Activated CD4-positive, alpha-beta T cell treated with anti-CD3 and anti-CD28 coated beads for 36 hours (primary cell): ENCODE measurements at regions of chr15 and their contacts with region 1.

Region 1: GRCh38 chr15:60585743-60586708 is 107.1 kb upstream of the ICE2 start:
- DNase-seq: peak; percentile 68
- ATAC-seq: no peak
- H3K4me3 Mint-ChIP-seq: peak overlapping the region; percentile 30
- H3K27ac Mint-ChIP-seq: peak overlapping the region; percentile 87
- H3K4me1 Mint-ChIP-seq: peaks cover 85% of the 10 kb centered on the region
- H3K27me3 Mint-ChIP-seq: no peaks in the 10 kb centered on the region

Region 2: GRCh38 chr15:59933607-59934006 is 652.4 kb before region 1 on chr15:
- CTCF ChIA-PET with region 1: no interaction called
- POLR2A ChIA-PET with region 1: no interaction called
- intact Hi-C with region 1: no loop called
- DNase-seq: no peak
- ATAC-seq: no peak
- H3K4me3 Mint-ChIP-seq: no peak overlapping the region
- H3K27ac Mint-ChIP-seq: no peak overlapping the region
- H3K4me1 Mint-ChIP-seq: no peaks in the 10 kb centered on the region
- H3K27me3 Mint-ChIP-seq: peaks cover 9% of the 10 kb centered on the region

Region 3: DNA sequence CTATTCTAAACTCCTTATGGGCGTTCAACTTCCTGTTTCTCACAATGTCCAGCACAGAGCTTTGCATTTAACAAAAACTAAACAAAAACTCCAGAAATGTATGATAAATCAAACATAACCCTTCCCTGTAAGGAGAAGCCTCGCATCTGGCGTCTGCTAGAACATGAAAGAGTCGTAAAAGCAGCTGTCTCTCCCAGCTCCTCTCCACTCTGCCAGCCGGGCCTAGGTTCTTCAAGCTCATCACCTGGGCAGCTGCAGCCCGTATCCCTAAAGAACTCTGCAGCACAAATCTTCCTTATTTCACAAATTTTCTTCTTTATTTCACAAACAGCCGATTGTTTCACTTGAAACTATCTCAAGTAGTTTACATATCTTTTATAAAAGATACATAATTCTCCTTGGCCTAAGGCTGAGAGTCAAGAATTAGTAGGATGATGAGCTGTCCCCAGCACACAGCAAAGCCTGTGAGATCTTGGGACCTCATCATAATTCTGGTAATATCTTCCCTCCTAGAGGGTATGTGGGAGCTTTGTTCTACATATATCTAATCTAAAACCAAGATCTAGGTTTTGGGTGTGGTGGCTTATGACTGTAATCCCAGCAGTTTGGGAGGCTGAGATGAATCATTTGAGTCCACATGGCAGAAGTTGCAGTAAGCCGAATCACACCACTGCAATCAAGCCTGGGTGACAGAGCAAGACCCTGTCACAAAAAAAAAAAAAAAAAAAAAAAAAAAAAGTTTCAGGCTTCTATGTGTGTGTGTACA is 223.5 kb before region 1 on chr15:
- CTCF ChIA-PET with region 1: interaction called, 5 read pairs
- POLR2A ChIA-PET with region 1: no interaction called
- intact Hi-C with region 1: loop called in 1 of 2 experiments (anchors 2 kb)
- DNase-seq: peak; percentile 74
- ATAC-seq: peak; percentile 97
- H3K4me3 Mint-ChIP-seq: no peak overlapping the region
- H3K27ac Mint-ChIP-seq: peak overlapping the region; percentile 53
- H3K4me1 Mint-ChIP-seq: peaks cover 18% of the 10 kb centered on the region
- H3K27me3 Mint-ChIP-seq: no peaks in the 10 kb centered on the region

Region 4: DNA sequence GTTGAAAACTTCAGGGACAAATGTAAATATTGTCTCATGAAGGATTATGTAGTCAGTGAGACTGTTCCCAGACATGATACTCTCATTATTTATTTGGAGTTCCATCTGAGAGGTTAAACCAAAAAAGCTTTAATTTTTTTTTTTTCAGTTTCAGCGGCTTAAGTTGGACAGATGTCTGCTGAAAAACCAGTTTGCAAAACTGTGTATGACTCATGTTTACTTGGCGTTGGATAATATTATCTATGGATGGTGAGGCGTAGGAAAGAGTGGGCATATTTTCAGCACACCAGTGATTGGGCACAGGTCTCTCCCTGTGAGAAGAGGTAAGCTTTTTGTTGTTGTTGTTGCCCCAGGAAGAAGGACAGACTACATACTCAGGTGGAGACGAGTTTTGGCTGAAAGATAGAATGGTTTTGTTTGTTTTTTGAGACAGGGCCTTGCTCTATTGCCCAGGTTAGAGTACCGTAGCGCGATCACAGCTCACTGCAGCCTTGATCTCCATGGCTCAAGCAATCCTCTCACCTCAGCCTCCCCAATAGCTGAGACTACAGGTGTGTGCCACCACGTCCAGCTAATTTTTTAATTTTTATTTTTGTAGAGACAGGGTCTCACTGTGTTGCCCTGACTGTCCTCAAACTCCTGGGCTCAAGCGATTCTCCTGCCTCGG is 171.9 kb before region 1 on chr15:
- CTCF ChIA-PET with region 1: no interaction called
- POLR2A ChIA-PET with region 1: no interaction called
- intact Hi-C with region 1: no loop called
- DNase-seq: no peak
- ATAC-seq: no peak
- H3K4me3 Mint-ChIP-seq: no peak overlapping the region
- H3K27ac Mint-ChIP-seq: no peak overlapping the region
- H3K4me1 Mint-ChIP-seq: peaks cover 1% of the 10 kb centered on the region
- H3K27me3 Mint-ChIP-seq: no peaks in the 10 kb centered on the region

Region 5: GRCh38 chr15:60536314-60536713 is 49.7 kb before region 1 on chr15:
- CTCF ChIA-PET with region 1: interaction called, 15 read pairs
- POLR2A ChIA-PET with region 1: no interaction called
- intact Hi-C with region 1: no loop called
- DNase-seq: no peak
- ATAC-seq: no peak
- H3K4me3 Mint-ChIP-seq: no peak overlapping the region
- H3K27ac Mint-ChIP-seq: no peak overlapping the region
- H3K4me1 Mint-ChIP-seq: peaks cover 83% of the 10 kb centered on the region
- H3K27me3 Mint-ChIP-seq: no peaks in the 10 kb centered on the region

Region 6: GRCh38 chr15:60635507-60636352 is 49.7 kb after region 1 on chr15:
- CTCF ChIA-PET with region 1: no interaction called
- POLR2A ChIA-PET with region 1: no interaction called
- intact Hi-C with region 1: no loop called
- DNase-seq: no peak
- ATAC-seq: no peak
- H3K4me3 Mint-ChIP-seq: no peak overlapping the region
- H3K27ac Mint-ChIP-seq: no peak overlapping the region
- H3K4me1 Mint-ChIP-seq: peaks cover 7% of the 10 kb centered on the region
- H3K27me3 Mint-ChIP-seq: no peaks in the 10 kb centered on the region

Region 7: DNA sequence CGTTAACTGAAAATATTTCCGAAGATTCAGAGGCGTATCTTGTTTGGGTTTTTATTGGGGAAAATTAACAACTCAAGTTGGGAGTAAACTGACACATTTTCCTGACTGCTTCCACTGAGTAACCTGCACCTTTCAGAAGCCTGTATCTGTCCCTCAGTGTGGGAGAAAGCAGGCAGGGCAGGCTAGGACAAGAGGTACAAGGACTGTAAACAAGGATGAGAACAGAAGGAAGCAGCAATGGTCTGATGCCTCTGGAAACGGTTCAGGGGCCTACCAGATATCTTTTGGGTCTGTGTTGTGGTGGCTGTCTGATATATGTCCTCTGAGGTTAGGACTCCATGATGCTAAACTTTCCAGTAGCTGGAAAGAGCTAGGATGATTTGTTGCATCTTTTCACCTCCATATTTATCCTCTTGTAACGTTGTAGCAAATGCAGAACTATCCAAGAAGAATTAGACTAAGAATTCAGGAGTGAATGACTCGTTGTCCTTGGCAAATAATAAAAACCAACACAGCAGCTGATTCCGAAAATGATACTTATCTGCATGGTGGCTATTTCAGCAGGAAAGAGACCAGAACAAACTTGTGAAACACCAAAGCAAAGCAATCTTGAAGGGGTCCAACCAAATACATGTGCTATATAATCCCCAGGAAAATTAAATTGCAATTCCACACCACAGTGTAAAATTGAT is 88.8 kb after region 1 on chr15:
- CTCF ChIA-PET with region 1: interaction called, 10 read pairs
- POLR2A ChIA-PET with region 1: no interaction called
- intact Hi-C with region 1: no loop called
- DNase-seq: no peak
- ATAC-seq: no peak
- H3K4me3 Mint-ChIP-seq: no peak overlapping the region
- H3K27ac Mint-ChIP-seq: no peak overlapping the region
- H3K4me1 Mint-ChIP-seq: peaks cover 31% of the 10 kb centered on the region
- H3K27me3 Mint-ChIP-seq: no peaks in the 10 kb centered on the region

Region 8: GRCh38 chr15:60798821-60799220 is 212.8 kb after region 1 on chr15:
- CTCF ChIA-PET with region 1: interaction called, 7 read pairs
- POLR2A ChIA-PET with region 1: interaction called, 6 read pairs
- intact Hi-C with region 1: loop called (anchors 5 kb)
- DNase-seq: peak; percentile 81
- ATAC-seq: peak; percentile 80
- H3K4me3 Mint-ChIP-seq: no peak overlapping the region
- H3K27ac Mint-ChIP-seq: peak overlapping the region; percentile 95
- H3K4me1 Mint-ChIP-seq: peaks cover 85% of the 10 kb centered on the region
- H3K27me3 Mint-ChIP-seq: no peaks in the 10 kb centered on the region

Region 9: DNA sequence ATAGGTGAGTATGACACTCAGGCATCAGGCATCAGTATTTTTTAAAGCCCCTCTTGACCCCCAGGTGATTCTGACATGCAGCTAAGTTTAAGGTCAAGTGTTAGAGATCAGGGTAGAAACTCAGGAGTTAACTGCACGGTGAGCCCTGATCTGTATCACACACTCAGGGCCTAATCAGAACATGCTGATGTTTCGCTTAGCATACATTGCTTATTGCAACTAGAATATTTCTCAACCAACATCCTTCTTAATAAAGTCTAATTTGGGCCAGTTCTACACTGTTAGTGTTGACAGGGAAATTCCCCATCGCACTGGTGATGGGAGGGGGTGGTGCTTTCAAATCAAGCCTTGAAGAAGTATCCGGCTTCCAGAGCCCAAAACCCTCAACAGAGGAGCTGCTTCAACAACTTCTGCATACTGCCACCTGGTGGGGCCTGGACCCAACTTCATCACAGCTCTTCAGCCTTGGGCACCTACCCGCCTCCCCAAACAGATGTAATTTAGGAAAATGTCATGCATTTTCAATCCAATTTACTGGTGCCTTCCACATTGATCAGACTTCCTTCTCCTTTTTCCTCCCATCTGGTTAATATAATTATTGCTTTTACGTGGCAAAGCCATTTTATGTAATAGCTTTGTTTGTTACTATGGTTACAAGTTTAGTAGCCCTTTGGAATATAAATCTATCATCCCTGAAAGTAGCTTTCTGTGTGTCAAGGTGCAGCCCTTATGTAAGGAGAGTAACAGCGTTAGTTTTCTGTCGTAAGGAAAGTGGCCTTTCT is 330.8 kb after region 1 on chr15:
- CTCF ChIA-PET with region 1: interaction called, 114 read pairs
- POLR2A ChIA-PET with region 1: interaction called, 4 read pairs
- intact Hi-C with region 1: loop called (anchors 1 kb)
- DNase-seq: peak; percentile 94
- ATAC-seq: peak; percentile 94
- H3K4me3 Mint-ChIP-seq: no peak overlapping the region
- H3K27ac Mint-ChIP-seq: peak overlapping the region; percentile 51
- H3K4me1 Mint-ChIP-seq: peaks cover 27% of the 10 kb centered on the region
- H3K27me3 Mint-ChIP-seq: no peaks in the 10 kb centered on the region